Caco-2 (cell line): ENCODE measurements at regions of chr15 and their contacts with region 1.

Region 1: GRCh38 chr15:20356444-20356910 is 185.1 kb downstream of the GOLGA6L6 start:
- DNase-seq: peak; percentile 84 to 91
- H3K4me3 ChIP-seq: no peak overlapping the region
- H3K4me3 Mint-ChIP-seq: no peak overlapping the region
- H3K27ac Mint-ChIP-seq: no peak overlapping the region
- H3K4me1 ChIP-seq: no peaks in the 10 kb centered on the region; the same call in 1 of the 2 replicates
- H3K4me1 Mint-ChIP-seq: no peaks in the 10 kb centered on the region
- H3K27me3 ChIP-seq: no peaks in the 10 kb centered on the region
- H3K27me3 Mint-ChIP-seq: peaks cover 3% of the 10 kb centered on the region
- CTCF ChIP-seq: peak; percentile 98 to 100

Region 2: DNA sequence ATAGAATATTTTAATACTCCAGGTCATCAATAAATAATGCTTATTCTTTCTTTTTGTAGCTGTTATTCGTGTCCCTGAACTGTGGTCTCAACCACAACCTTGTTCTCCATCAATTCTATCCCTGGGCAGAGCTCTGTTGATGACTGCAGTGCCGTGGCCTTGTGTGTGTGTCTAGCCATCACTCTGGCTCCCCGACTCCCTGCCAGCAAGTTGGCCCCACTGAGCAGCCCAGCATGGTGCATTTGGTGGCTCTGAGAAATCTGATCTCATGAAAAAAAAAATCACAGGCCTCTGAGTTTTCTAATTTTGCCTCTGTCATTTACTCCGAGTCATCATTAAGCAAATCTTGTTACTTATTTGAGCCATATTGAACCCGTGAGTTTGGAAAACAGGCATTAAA is 20.4 kb after region 1 on chr15:
- CTCF ChIA-PET with region 1: no interaction called
- POLR2A ChIA-PET with region 1: no interaction called
- intact Hi-C with region 1: loop called (anchors 1 kb)
- DNase-seq: no peak
- H3K4me3 ChIP-seq: no peak overlapping the region
- H3K4me3 Mint-ChIP-seq: no peak overlapping the region
- H3K27ac Mint-ChIP-seq: no peak overlapping the region
- H3K4me1 ChIP-seq: no peaks in the 10 kb centered on the region
- H3K4me1 Mint-ChIP-seq: no peaks in the 10 kb centered on the region
- H3K27me3 ChIP-seq: no peaks in the 10 kb centered on the region
- H3K27me3 Mint-ChIP-seq: no peaks in the 10 kb centered on the region
- CTCF ChIP-seq: no peak